ENCODE measurements at regions of chr19 and their contacts with region 1.

Region 1: GRCh38 chr19:51393959-51394836 is 3.8 kb upstream of the C19orf84 start:
- DNase-seq: peak; percentile 92
- H3K4me3 Mint-ChIP-seq: peak overlapping the region; percentile 88
- H3K27ac Mint-ChIP-seq: peak overlapping the region; percentile 90
- H3K4me1 Mint-ChIP-seq: peaks cover 55% of the 10 kb centered on the region
- H3K27me3 Mint-ChIP-seq: no peaks in the 10 kb centered on the region

Region 2: GRCh38 chr19:51327066-51328001 is 66.9 kb before region 1 on chr19:
- intact Hi-C with region 1: loop called (anchors 1 kb)
- DNase-seq: peak; percentile 49
- H3K4me3 Mint-ChIP-seq: peak overlapping the region; percentile 79
- H3K27ac Mint-ChIP-seq: peak overlapping the region; percentile 63
- H3K4me1 Mint-ChIP-seq: peaks cover 12% of the 10 kb centered on the region
- H3K27me3 Mint-ChIP-seq: peaks cover 24% of the 10 kb centered on the region

Region 3: DNA sequence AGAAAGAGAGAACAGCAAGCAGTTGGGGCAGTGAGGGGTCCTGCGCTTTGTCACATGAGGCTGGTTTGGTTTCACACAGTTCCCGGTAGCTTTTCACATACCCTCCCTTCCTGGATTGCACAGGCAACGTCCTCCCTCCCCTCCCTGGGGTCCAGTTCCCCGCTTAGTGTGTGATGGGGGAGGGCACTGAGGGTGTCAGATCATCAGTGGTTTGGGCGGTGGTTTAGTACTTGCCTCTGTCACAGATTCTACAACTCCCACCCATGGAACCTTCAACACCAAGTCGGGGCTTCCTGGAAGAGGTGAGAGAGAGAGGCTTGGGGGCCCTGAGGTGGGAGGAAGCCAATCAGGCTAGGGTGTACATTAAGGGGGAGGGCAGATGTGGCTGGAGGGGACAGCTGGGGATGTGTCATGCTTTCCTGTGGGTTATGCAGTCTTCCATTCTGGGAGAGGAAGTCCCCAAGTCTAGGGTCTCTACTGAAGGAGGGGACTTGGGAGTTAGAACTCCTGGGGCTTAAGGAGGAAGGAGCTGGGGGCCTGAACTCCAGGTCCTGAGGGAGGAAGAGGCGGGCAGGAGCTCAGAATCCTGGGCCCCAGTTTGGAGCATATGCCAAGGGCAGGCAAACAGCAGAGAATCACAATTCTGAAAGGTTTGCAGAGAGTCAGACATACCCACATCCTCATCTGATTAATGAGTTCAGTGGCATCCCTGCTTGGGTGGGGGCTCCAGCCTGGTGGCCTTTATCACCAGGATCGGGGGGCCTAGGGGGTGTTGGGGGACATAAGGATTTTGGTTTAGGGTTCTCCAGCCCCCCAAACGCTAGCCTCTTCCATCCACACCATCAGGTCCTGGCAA is 21.3 kb before region 1 on chr19 and contains the start of gene NKG7:
- intact Hi-C with region 1: loop called (anchors 1 kb)
- DNase-seq: peak; percentile 68
- H3K4me3 Mint-ChIP-seq: peak within 1 kb of the TSS; percentile 87
- H3K27ac Mint-ChIP-seq: peak within 1 kb of the TSS; percentile 87
- H3K4me1 Mint-ChIP-seq: peaks cover 74% of the 10 kb centered on the region
- H3K27me3 Mint-ChIP-seq: no peaks in the 10 kb centered on the region
- total RNA-seq, gene NKG7: 376 and 393 TPM in 2 replicates

Region 4: GRCh38 chr19:51422053-51422448 is 27.9 kb after region 1 on chr19:
- intact Hi-C with region 1: loop called (anchors 1 kb)
- DNase-seq: peak; percentile 78
- H3K4me3 Mint-ChIP-seq: no peak overlapping the region
- H3K27ac Mint-ChIP-seq: no peak overlapping the region
- H3K4me1 Mint-ChIP-seq: peaks cover 10% of the 10 kb centered on the region
- H3K27me3 Mint-ChIP-seq: peaks cover 26% of the 10 kb centered on the region

Region 5: GRCh38 chr19:51637362-51637978 is 243.3 kb after region 1 on chr19:
- intact Hi-C with region 1: loop called (anchors 1 kb)
- DNase-seq: no peak
- H3K4me3 Mint-ChIP-seq: no peak overlapping the region
- H3K27ac Mint-ChIP-seq: no peak overlapping the region
- H3K4me1 Mint-ChIP-seq: no peaks in the 10 kb centered on the region
- H3K27me3 Mint-ChIP-seq: peaks cover 19% of the 10 kb centered on the region